ENCODE measurements at regions of chrX and their contacts with region 1.

Region 1: GRCh38 chrX:130110379-130111219 is at the start of gene ELF4:
- DNase-seq: peak in 8 of 9 experiments; percentile 38 to 83 (median 65)
- ATAC-seq: peak; percentile 75
- H3K4me3 ChIP-seq: peak within 1 kb of the TSS; percentile 54 to 58
- H3K4me3 Mint-ChIP-seq: peak within 1 kb of the TSS; percentile 87
- H3K27ac ChIP-seq: peak within 1 kb of the TSS; percentile 35 to 73
- H3K27ac Mint-ChIP-seq: peak within 1 kb of the TSS; percentile 94
- H3K4me1 ChIP-seq: peaks cover 10% of the 10 kb centered on the region
- H3K4me1 Mint-ChIP-seq: peaks cover 30% of the 10 kb centered on the region
- H3K27me3 ChIP-seq: no peaks in the 10 kb centered on the region
- H3K27me3 Mint-ChIP-seq: no peaks in the 10 kb centered on the region
- CTCF ChIP-seq: no peak
- total RNA-seq, gene ELF4: 11.7 to 13.8 TPM

Region 2: GRCh38 chrX:130039847-130040246 is 70.8 kb before region 1 on chrX:
- CTCF ChIA-PET with region 1: no interaction called
- POLR2A ChIA-PET with region 1: no interaction called
- intact Hi-C with region 1: no loop called
- DNase-seq: no peak
- ATAC-seq: no peak
- H3K4me3 ChIP-seq: no peak overlapping the region
- H3K4me3 Mint-ChIP-seq: no peak overlapping the region
- H3K27ac ChIP-seq: no peak overlapping the region
- H3K27ac Mint-ChIP-seq: no peak overlapping the region
- H3K4me1 ChIP-seq: no peaks in the 10 kb centered on the region
- H3K4me1 Mint-ChIP-seq: no peaks in the 10 kb centered on the region
- H3K27me3 ChIP-seq: no peaks in the 10 kb centered on the region
- H3K27me3 Mint-ChIP-seq: no peaks in the 10 kb centered on the region
- CTCF ChIP-seq: no peak

Region 3: DNA sequence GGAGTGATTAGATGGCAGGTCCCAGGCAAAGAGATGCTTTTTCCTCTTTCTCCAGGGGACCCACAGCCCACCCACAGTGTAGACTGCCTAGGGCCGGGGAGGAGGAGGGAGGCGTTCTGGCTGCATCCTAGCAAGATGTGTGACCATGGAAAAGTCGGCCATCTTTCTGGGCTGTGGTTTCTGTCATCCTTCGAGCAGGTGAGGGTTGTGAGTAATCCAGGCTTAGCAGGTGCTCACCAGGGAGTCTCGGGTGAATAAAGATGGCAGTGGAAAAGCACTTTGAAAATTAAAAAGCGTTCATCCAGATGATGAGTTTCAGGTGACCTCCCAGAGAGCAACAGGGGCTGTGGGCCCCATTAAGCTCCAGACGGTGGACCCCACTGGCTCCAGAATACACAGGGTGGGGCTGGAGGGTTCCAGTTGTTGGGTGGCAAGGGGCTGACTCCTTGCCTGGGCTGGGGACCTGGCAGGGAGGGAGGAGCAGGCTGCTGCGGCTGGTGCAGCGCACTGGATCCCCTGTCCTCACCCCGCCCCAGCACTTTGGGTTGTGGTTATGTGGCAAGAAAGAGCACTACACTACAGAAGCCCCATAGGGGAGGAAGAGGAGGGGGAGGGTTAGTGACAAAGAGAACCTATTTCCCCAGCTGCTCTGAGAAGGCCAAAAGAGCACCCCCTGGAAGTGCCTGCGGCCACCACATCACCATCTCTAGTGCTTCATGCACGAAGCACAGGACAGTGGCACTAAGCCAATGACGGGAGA is 24.0 kb before region 1 on chrX:
- CTCF ChIA-PET with region 1: interaction called, 129 read pairs
- POLR2A ChIA-PET with region 1: interaction called, 5 read pairs
- intact Hi-C with region 1: loop called (anchors 1 to 2 kb)
- DNase-seq: peak; percentile 24 to 87 (median 74)
- ATAC-seq: peak; percentile 66
- H3K4me3 ChIP-seq: peak overlapping the region; percentile 68 to 71
- H3K4me3 Mint-ChIP-seq: peak overlapping the region; percentile 88
- H3K27ac ChIP-seq: peak overlapping the region; percentile 62 to 68
- H3K27ac Mint-ChIP-seq: peak overlapping the region; percentile 89
- H3K4me1 ChIP-seq: peaks cover 67% of the 10 kb centered on the region
- H3K4me1 Mint-ChIP-seq: peaks cover 58% of the 10 kb centered on the region
- H3K27me3 ChIP-seq: no peaks in the 10 kb centered on the region
- H3K27me3 Mint-ChIP-seq: no peaks in the 10 kb centered on the region
- CTCF ChIP-seq: no peak

Region 4: DNA sequence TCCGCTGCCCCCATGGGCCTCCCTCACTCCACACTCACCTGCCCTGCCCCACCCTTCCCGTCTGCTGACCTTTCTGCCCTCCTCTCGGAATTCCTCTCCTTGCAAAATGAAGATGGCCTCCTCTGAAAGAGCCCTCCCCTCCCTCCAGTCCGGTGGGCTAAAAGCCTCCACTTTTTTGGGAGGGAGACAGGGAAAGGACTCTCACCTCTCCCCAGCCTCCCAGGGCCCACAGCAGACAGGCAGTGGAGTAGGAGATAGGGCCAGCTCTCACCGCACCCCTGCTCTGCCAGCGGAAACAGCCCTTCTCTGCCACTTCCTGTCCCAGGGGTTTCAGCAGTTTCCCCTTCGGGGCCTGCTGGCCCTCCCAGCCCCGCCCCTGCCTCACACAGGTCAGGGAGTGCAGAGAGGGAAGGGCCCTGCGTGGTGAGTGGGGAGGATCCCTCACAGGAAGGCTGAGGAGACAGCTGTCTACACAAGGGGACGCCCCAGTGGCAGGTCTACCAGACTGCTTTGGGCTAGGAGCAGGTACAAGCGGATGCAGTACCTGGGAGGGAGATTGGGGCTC is 18.6 kb before region 1 on chrX:
- CTCF ChIA-PET with region 1: interaction called, 5 read pairs
- POLR2A ChIA-PET with region 1: interaction called, 5 read pairs
- intact Hi-C with region 1: loop called (anchors 1 to 2 kb)
- DNase-seq: peak; percentile 69 to 95 (median 83)
- ATAC-seq: peak; percentile 97
- H3K4me3 ChIP-seq: peak overlapping the region; percentile 50 to 58
- H3K4me3 Mint-ChIP-seq: peak overlapping the region; percentile 81
- H3K27ac ChIP-seq: peak overlapping the region; percentile 54 to 70
- H3K27ac Mint-ChIP-seq: peak overlapping the region; percentile 93
- H3K4me1 ChIP-seq: peaks cover 67% of the 10 kb centered on the region
- H3K4me1 Mint-ChIP-seq: peaks cover 58% of the 10 kb centered on the region
- H3K27me3 ChIP-seq: no peaks in the 10 kb centered on the region
- H3K27me3 Mint-ChIP-seq: no peaks in the 10 kb centered on the region
- CTCF ChIP-seq: no peak

Region 5: DNA sequence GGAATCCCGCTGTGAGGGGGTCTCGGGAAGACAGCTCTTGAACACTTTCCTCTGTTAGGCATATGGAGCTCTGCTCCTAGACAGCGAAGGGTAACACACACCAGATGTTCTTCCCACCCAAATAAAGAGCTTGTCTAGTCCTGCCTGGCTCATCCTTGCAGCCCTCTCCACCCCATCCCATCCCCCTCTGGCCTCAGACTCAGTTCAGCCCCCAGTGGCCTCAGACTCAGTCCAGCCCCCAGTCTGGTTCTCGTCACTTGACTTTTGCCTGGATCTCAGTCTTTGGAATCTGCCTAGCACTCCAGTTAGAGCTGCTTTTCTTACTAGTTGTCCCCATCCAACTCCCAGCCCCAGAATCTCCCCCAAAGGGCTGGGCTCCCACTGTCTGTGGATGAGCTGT is 76.1 kb after region 1 on chrX:
- CTCF ChIA-PET with region 1: no interaction called
- POLR2A ChIA-PET with region 1: no interaction called
- intact Hi-C with region 1: no loop called
- DNase-seq: no peak
- ATAC-seq: no peak
- H3K4me3 ChIP-seq: no peak overlapping the region
- H3K4me3 Mint-ChIP-seq: no peak overlapping the region
- H3K27ac ChIP-seq: no peak overlapping the region
- H3K27ac Mint-ChIP-seq: no peak overlapping the region
- H3K4me1 ChIP-seq: peaks cover 10% of the 10 kb centered on the region
- H3K4me1 Mint-ChIP-seq: peaks cover 10% of the 10 kb centered on the region
- H3K27me3 ChIP-seq: no peaks in the 10 kb centered on the region
- H3K27me3 Mint-ChIP-seq: no peaks in the 10 kb centered on the region
- CTCF ChIP-seq: no peak

Measured in CD8-positive, alpha-beta T cell (primary cell).